ENCODE measurements at regions of chr2 and their contacts with region 1.

Region 1: DNA sequence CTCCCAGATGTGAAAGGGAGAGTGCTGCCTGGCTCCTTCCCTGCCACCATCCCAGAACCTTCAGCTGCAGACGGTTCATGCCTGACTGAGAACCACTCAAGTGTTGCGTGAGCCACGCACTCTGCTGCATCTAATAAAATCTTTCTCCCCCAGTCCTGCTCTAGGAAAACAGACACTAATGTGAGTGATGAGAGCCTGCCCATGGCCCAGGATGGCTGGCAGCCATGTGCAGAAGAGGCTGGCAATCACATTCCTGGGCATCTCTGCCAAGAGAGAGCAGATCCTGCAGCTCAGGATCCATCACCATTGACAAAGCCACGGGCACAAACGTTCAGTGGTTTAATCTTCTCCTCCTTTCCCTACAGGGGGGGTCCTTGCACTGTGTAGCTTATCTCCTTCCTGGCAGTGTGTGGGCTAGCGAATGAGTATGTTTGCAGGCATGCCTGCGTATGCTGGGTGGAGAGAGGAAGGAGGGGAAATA is 477.5 kb downstream of the SLC4A3 start:
- DNase-seq: peak; percentile 91
- ATAC-seq: peak; percentile 100
- H3K4me3 ChIP-seq: no peak overlapping the region
- H3K27ac ChIP-seq: no peak overlapping the region
- H3K4me1 ChIP-seq: peaks cover 3% of the 10 kb centered on the region
- H3K27me3 ChIP-seq: no peaks in the 10 kb centered on the region
- CTCF ChIP-seq: peak; percentile 90
- POLR2A ChIP-seq: peak; percentile 63; the same call in 1 of the 2 replicates
- RAD21 ChIP-seq: peak; percentile 98

Region 2: GRCh38 chr2:220277445-220278007 is 172.6 kb after region 1 on chr2:
- CTCF ChIA-PET with region 1: no interaction called
- POLR2A ChIA-PET with region 1: no interaction called
- dilution Hi-C with region 1: no loop called
- in situ Hi-C with region 1: no loop called
- intact Hi-C with region 1: loop called (anchors 5 kb)
- DNase-seq: peak; percentile 89
- ATAC-seq: peak; percentile 40
- H3K4me3 ChIP-seq: no peak overlapping the region
- H3K27ac ChIP-seq: peak overlapping the region; percentile 84; the same call in 1 of the 2 replicates
- H3K4me1 ChIP-seq: peaks cover 23% of the 10 kb centered on the region
- H3K27me3 ChIP-seq: no peaks in the 10 kb centered on the region
- CTCF ChIP-seq: no peak
- POLR2A ChIP-seq: no peak
- RAD21 ChIP-seq: no peak

Region 3: GRCh38 chr2:220504938-220505503 is 400.1 kb after region 1 on chr2:
- CTCF ChIA-PET with region 1: no interaction called
- POLR2A ChIA-PET with region 1: no interaction called
- dilution Hi-C with region 1: no loop called
- in situ Hi-C with region 1: no loop called
- intact Hi-C with region 1: loop called (anchors 5 kb)
- DNase-seq: peak; percentile 86
- ATAC-seq: peak; percentile 94
- H3K4me3 ChIP-seq: no peak overlapping the region
- H3K27ac ChIP-seq: peak overlapping the region; percentile 72
- H3K4me1 ChIP-seq: peaks cover 15% of the 10 kb centered on the region
- H3K27me3 ChIP-seq: no peaks in the 10 kb centered on the region
- CTCF ChIP-seq: no peak
- POLR2A ChIP-seq: no peak
- RAD21 ChIP-seq: no peak

Region 4: GRCh38 chr2:220586980-220587530 is 482.1 kb after region 1 on chr2:
- CTCF ChIA-PET with region 1: no interaction called
- POLR2A ChIA-PET with region 1: no interaction called
- dilution Hi-C with region 1: no loop called
- in situ Hi-C with region 1: no loop called
- intact Hi-C with region 1: loop called (anchors 10 kb)
- DNase-seq: peak; percentile 79
- ATAC-seq: peak; percentile 92
- H3K4me3 ChIP-seq: no peak overlapping the region
- H3K27ac ChIP-seq: peak overlapping the region; percentile 86; the same call in 1 of the 2 replicates
- H3K4me1 ChIP-seq: peaks cover 8% of the 10 kb centered on the region
- H3K27me3 ChIP-seq: no peaks in the 10 kb centered on the region
- CTCF ChIP-seq: no peak
- POLR2A ChIP-seq: no peak
- RAD21 ChIP-seq: no peak

Region 5: GRCh38 chr2:220687231-220687843 is 582.4 kb after region 1 on chr2:
- CTCF ChIA-PET with region 1: no interaction called
- POLR2A ChIA-PET with region 1: no interaction called
- dilution Hi-C with region 1: no loop called
- in situ Hi-C with region 1: no loop called
- intact Hi-C with region 1: loop called (anchors 1 kb)
- DNase-seq: peak; percentile 60
- ATAC-seq: peak; percentile 87
- H3K4me3 ChIP-seq: no peak overlapping the region
- H3K27ac ChIP-seq: no peak overlapping the region
- H3K4me1 ChIP-seq: no peaks in the 10 kb centered on the region
- H3K27me3 ChIP-seq: no peaks in the 10 kb centered on the region
- CTCF ChIP-seq: peak; percentile 74
- POLR2A ChIP-seq: no peak
- RAD21 ChIP-seq: peak; percentile 83

Region 6: GRCh38 chr2:220744861-220745260 is 640.0 kb after region 1 on chr2:
- CTCF ChIA-PET with region 1: no interaction called
- POLR2A ChIA-PET with region 1: no interaction called
- dilution Hi-C with region 1: no loop called
- in situ Hi-C with region 1: no loop called
- intact Hi-C with region 1: no loop called
- DNase-seq: peak; percentile 52
- ATAC-seq: peak; percentile 89
- H3K4me3 ChIP-seq: no peak overlapping the region
- H3K27ac ChIP-seq: peak overlapping the region; percentile 50; the same call in 1 of the 2 replicates
- H3K4me1 ChIP-seq: peaks cover 8% of the 10 kb centered on the region; the same call in 1 of the 2 replicates
- H3K27me3 ChIP-seq: no peaks in the 10 kb centered on the region
- CTCF ChIP-seq: no peak
- POLR2A ChIP-seq: no peak
- RAD21 ChIP-seq: no peak

Region 7: DNA sequence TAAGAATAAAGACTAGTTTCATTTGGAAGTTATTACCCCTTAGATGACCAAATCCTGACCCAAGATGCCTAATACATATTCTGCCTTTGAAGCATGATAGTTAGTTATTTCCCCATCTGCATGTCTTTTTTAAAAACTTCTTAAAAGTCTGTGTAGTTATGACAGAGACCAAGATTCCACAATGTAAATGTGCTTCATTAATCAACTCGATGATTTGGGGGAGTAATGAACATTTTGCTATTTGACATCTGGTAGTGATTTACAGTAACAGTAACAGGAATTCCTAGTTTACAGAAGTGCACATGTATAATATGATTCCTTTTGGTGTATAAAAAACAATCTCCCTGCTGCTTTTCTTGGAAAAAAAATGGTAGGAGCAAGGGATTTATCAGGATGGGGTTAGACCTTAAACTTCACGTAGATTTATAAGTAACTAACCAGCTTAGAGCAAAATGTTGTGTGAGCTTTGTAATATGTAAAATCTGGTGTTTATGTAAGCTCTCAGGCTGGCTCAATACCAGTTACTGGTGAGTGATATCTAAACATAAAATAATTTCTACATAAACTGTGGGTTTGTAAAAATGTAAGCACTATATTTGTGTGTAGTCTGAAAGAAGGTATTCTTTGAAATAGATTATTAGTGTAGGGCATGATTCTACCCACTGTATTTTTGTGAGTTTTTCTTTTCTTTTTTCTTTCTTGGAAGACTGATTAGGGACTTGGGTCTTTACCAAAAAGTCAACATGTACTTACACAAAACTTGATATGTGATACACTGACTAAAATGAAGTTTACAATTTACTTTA is 825.6 kb after region 1 on chr2:
- CTCF ChIA-PET with region 1: no interaction called
- POLR2A ChIA-PET with region 1: no interaction called
- dilution Hi-C with region 1: no loop called
- in situ Hi-C with region 1: no loop called
- intact Hi-C with region 1: loop called (anchors 5 kb)
- DNase-seq: peak; percentile 92
- ATAC-seq: peak; percentile 90
- H3K4me3 ChIP-seq: no peak overlapping the region
- H3K27ac ChIP-seq: no peak overlapping the region
- H3K4me1 ChIP-seq: peaks cover 12% of the 10 kb centered on the region
- H3K27me3 ChIP-seq: peaks cover 18% of the 10 kb centered on the region
- CTCF ChIP-seq: no peak
- POLR2A ChIP-seq: no peak
- RAD21 ChIP-seq: no peak

Region 8: GRCh38 chr2:221465776-221466175 is 1360.9 kb after region 1 on chr2:
- CTCF ChIA-PET with region 1: no interaction called
- POLR2A ChIA-PET with region 1: no interaction called
- dilution Hi-C with region 1: no loop called
- in situ Hi-C with region 1: no loop called
- intact Hi-C with region 1: no loop called
- DNase-seq: peak; percentile 15
- ATAC-seq: no peak
- H3K4me3 ChIP-seq: no peak overlapping the region
- H3K27ac ChIP-seq: no peak overlapping the region
- H3K4me1 ChIP-seq: no peaks in the 10 kb centered on the region
- H3K27me3 ChIP-seq: no peaks in the 10 kb centered on the region
- CTCF ChIP-seq: no peak
- POLR2A ChIP-seq: no peak
- RAD21 ChIP-seq: no peak

Region 9: DNA sequence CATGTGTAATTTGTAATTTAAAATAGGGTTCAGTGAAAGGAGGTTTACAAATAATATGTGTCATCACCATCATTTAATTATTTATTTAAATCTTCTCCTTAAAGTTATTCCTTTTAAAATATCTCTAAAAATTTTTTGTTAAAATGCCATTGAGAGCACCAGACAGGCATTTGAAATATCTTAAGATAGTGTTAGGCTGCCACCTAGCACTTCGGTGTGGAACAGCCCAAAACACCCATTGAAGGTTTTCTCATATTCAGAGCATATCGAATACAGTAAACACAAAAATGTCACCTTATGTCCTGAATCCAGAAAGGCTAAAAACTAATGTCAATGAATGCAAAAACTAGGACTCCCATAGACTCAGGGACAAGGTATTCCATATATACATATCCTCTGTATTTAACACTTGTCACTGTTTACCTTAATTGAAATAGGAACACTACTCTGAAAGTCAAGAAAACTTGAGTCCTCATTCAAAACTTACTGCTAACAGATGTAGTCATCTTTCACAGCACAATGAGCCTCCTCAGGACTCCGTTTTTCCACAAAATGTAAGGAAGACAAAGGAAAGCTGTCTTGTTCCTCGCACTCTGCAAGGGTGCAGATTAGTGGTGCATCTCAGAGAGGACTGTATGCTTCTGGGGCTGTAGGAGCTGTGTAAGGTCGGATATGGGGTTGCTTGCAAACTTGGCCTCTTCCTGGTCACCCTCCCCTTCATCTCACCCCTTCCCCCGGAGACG is 1864.3 kb after region 1 on chr2:
- CTCF ChIA-PET with region 1: no interaction called
- POLR2A ChIA-PET with region 1: no interaction called
- dilution Hi-C with region 1: no loop called
- in situ Hi-C with region 1: loop called (anchors 25 kb)
- intact Hi-C with region 1: loop called (anchors 5 kb)
- DNase-seq: peak; percentile 55
- ATAC-seq: peak; percentile 96
- H3K4me3 ChIP-seq: no peak overlapping the region
- H3K27ac ChIP-seq: no peak overlapping the region
- H3K4me1 ChIP-seq: no peaks in the 10 kb centered on the region; the same call in 1 of the 2 replicates
- H3K27me3 ChIP-seq: peaks cover 4% of the 10 kb centered on the region
- CTCF ChIP-seq: peak; percentile 84
- POLR2A ChIP-seq: 0 out of 2 replicates have a peak, but pooled peaks have one; percentile 32
- RAD21 ChIP-seq: peak; percentile 84